OCI-LY7 (cell line): ENCODE measurements at regions of chr1 and their contacts with region 1.

Region 1: GRCh38 chr1:8465013-8465412 is 147.1 kb downstream of the SLC45A1 start:
- DNase-seq: peak; percentile 45
- H3K4me3 ChIP-seq: no peak overlapping the region
- H3K27ac ChIP-seq: peak overlapping the region; percentile 32
- H3K4me1 ChIP-seq: peaks cover 87% of the 10 kb centered on the region
- CTCF ChIP-seq: peak; percentile 63

Region 2: DNA sequence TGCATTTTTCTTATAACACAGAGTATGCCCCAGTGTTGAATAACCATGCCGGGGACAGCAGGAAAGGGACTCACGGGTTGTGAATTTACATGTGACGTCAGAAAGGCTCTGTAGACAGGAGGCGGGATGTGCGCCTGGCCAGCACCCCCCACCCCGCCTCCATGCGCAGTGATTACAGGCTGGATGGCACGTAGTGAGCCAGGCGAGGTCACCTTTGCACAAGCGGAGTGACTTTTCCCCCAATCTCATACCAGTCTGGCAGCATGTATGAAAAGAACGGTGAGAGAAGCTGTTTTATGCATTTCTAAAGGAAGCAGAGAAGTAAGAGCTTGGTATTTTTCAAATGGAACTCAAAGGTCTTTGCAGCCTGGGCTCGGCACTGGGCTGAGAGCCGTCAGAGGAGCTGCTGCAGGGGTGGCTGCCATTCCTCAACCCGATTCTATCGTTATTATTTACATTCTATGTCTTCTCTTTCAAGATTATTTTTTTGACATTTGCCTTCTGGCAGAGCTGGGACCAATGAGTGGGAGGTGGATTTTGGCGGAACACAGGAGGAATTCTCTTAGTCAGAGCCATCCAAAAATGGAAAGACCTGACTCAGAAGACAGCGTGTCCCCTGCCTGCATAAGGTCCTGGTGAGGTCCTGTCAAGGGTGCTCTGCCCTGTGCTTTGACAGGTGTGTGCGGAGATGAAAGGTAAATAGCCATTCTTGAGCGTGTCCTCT is 262.7 kb before region 1 on chr1:
- CTCF ChIA-PET with region 1: no interaction called
- POLR2A ChIA-PET with region 1: no interaction called
- intact Hi-C with region 1: no loop called
- DNase-seq: no peak
- H3K4me3 ChIP-seq: no peak overlapping the region
- H3K27ac ChIP-seq: no peak overlapping the region
- H3K4me1 ChIP-seq: no peaks in the 10 kb centered on the region
- CTCF ChIP-seq: no peak

Region 3: DNA sequence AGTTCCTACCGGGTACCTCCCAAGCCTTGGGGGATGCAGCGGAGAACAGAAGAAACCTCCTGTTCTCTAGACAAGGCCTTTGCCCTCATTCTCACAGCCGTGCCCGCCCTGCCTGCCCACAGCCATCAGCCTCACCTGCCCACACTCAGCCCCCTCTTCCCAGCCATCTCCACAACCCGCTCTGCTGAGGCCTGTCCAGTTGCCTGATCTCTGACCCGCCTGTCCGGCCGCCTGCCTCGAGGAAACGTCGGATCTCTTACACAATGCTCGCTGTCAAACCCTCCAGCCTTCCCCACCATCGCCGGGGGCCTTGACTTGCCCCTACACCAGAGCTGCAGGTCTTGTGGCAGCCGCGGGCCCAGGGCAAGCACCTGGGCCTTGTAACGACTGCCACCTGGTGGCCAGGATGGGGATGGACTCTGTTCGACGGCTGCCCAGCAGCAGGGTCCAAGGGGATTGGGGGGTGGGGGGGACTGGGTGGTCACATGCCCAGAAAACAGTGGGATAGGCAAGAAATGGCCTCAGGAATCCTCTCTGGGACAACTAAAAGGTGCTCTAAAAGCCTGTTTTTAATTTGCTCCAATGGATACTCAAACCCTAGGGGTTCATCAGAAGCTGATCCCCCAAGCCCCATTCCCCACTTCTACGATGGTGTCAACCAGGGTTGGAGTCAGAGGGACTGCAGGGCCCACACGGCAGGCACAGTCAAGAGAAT is 116.1 kb before region 1 on chr1:
- CTCF ChIA-PET with region 1: no interaction called
- POLR2A ChIA-PET with region 1: no interaction called
- intact Hi-C with region 1: no loop called
- DNase-seq: peak; percentile 77
- H3K4me3 ChIP-seq: no peak overlapping the region
- H3K27ac ChIP-seq: no peak overlapping the region
- H3K4me1 ChIP-seq: no peaks in the 10 kb centered on the region
- CTCF ChIP-seq: peak; percentile 87

Region 4: GRCh38 chr1:8431019-8431418 is 34.0 kb before region 1 on chr1:
- CTCF ChIA-PET with region 1: no interaction called
- POLR2A ChIA-PET with region 1: interaction called, 6 read pairs
- intact Hi-C with region 1: loop called (anchors 2 kb)
- DNase-seq: peak; percentile 86
- H3K4me3 ChIP-seq: peak overlapping the region; percentile 27
- H3K27ac ChIP-seq: peak overlapping the region; percentile 99
- H3K4me1 ChIP-seq: peaks cover 89% of the 10 kb centered on the region
- CTCF ChIP-seq: peak; percentile 69

Region 5: GRCh38 chr1:8571200-8571984 is 106.4 kb after region 1 on chr1:
- CTCF ChIA-PET with region 1: no interaction called
- POLR2A ChIA-PET with region 1: no interaction called
- intact Hi-C with region 1: loop called (anchors 5 kb)
- DNase-seq: peak; percentile 64
- H3K4me3 ChIP-seq: no peak overlapping the region
- H3K27ac ChIP-seq: peak overlapping the region; percentile 14
- H3K4me1 ChIP-seq: peaks cover 24% of the 10 kb centered on the region
- CTCF ChIP-seq: peak; percentile 97

Region 6: DNA sequence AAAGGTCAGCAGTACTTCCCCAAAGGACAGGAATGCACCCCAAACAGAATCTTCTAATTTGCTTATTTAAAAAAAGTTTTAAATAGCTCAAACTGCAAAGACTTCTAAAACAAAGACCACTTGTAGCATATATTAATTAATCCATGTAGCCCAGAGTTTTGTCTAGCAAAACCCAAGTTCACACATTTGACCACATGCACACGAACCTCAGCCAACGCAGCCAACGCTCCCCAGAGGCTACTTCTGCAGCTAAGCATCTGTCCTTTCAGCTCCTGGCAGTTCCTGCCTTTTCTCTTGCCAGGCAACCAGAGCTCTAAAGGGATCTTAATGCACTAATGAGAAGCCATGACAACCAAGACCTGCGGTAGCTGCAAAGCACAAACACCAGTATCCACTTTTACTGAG is 262.8 kb after region 1 on chr1:
- CTCF ChIA-PET with region 1: no interaction called
- POLR2A ChIA-PET with region 1: no interaction called
- intact Hi-C with region 1: loop called (anchors 5 kb)
- DNase-seq: no peak
- H3K4me3 ChIP-seq: no peak overlapping the region
- H3K27ac ChIP-seq: no peak overlapping the region
- H3K4me1 ChIP-seq: peaks cover 29% of the 10 kb centered on the region
- CTCF ChIP-seq: no peak